Ovary (tissue), 10 donors: ENCODE measurements at regions of chr1 and their contacts with region 1.

Region 1: GRCh38 chr1:183804881-183805841 is at the start of gene RGL1:
- DNase-seq: peak; percentile 74 to 83 (median 79)
- H3K4me3 ChIP-seq: peak within 1 kb of the TSS; percentile 54
- H3K27ac ChIP-seq: peak within 1 kb of the TSS; percentile 84 to 86
- H3K4me1 ChIP-seq: peaks cover 12% of the 10 kb centered on the region
- H3K27me3 ChIP-seq: no peaks in the 10 kb centered on the region
- CTCF ChIP-seq: no peak
- EP300 ChIP-seq: no peak
- POLR2A ChIP-seq: peak; percentile 80
- total RNA-seq, gene RGL1: 14.3 to 61.6 (median 25.7) TPM

Region 2: GRCh38 chr1:183209533-183210158 is 595.5 kb before region 1 on chr1:
- intact Hi-C with region 1: no loop called
- DNase-seq: no peak
- H3K4me3 ChIP-seq: no peak overlapping the region
- H3K27ac ChIP-seq: no peak overlapping the region
- H3K4me1 ChIP-seq: no peaks in the 10 kb centered on the region
- H3K27me3 ChIP-seq: no peaks in the 10 kb centered on the region
- CTCF ChIP-seq: no peak
- EP300 ChIP-seq: no peak
- POLR2A ChIP-seq: no peak

Region 3: GRCh38 chr1:183227963-183228649 is 577.1 kb before region 1 on chr1:
- intact Hi-C with region 1: no loop called
- DNase-seq: peak in 1 of 5 donors; percentile 49
- H3K4me3 ChIP-seq: no peak overlapping the region
- H3K27ac ChIP-seq: no peak overlapping the region
- H3K4me1 ChIP-seq: no peaks in the 10 kb centered on the region
- H3K27me3 ChIP-seq: no peaks in the 10 kb centered on the region
- CTCF ChIP-seq: peak in 1 of 3 donors; percentile 25
- EP300 ChIP-seq: no peak
- POLR2A ChIP-seq: no peak

Region 4: DNA sequence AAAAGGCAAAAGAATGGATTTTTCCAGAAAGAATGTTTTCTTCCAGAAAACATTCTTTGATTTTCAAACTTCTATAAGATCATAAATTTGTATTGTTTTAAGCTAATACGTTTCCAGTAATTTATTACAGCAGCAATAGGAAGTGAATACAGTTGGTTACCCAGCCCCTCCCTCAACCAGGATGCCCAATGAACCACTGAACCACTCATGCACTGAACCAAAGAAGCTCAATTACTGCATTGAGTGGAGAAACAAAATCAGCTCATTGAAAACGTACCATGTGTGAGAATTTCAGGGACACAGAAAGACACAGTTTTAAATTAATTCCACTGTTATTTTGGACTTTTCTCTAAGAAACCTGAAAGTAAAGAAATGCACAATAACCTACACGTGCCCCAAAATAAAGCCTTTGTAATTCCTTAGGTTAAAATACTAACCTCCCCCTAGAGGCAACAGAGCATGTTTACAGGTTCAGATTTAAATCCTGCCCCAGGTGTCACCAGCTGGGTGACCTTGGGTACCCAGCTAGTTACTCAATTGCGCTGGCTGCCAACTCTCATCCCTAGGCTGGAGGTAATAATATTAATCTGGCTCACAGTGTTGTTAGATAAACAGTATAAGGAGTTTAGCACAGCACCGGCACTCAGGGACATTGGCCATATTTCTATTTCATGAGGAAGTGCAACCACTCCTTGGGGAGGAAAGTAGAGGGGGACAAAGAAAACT is 498.7 kb before region 1 on chr1:
- intact Hi-C with region 1: no loop called
- DNase-seq: no peak
- H3K4me3 ChIP-seq: no peak overlapping the region
- H3K27ac ChIP-seq: no peak overlapping the region
- H3K4me1 ChIP-seq: peaks cover 11% of the 10 kb centered on the region
- H3K27me3 ChIP-seq: no peaks in the 10 kb centered on the region
- CTCF ChIP-seq: no peak
- EP300 ChIP-seq: no peak
- POLR2A ChIP-seq: no peak

Region 5: GRCh38 chr1:183871142-183871541 is 66.0 kb after region 1 on chr1:
- intact Hi-C with region 1: loop called in 2 of 4 experiments (anchors 10 kb)
- DNase-seq: no peak
- H3K4me3 ChIP-seq: no peak overlapping the region
- H3K27ac ChIP-seq: peak overlapping the region; percentile 82 to 88
- H3K4me1 ChIP-seq: peaks cover 24% of the 10 kb centered on the region
- H3K27me3 ChIP-seq: no peaks in the 10 kb centered on the region
- CTCF ChIP-seq: no peak
- EP300 ChIP-seq: no peak
- POLR2A ChIP-seq: no peak

Region 6: GRCh38 chr1:183881387-183882131 is 76.4 kb after region 1 on chr1:
- intact Hi-C with region 1: loop called in 3 of 4 experiments (anchors 10 kb)
- DNase-seq: peak; percentile 49 to 69 (median 59)
- H3K4me3 ChIP-seq: no peak overlapping the region
- H3K27ac ChIP-seq: no peak overlapping the region
- H3K4me1 ChIP-seq: peaks cover 15% of the 10 kb centered on the region
- H3K27me3 ChIP-seq: no peaks in the 10 kb centered on the region
- CTCF ChIP-seq: no peak
- EP300 ChIP-seq: no peak
- POLR2A ChIP-seq: no peak

Region 7: DNA sequence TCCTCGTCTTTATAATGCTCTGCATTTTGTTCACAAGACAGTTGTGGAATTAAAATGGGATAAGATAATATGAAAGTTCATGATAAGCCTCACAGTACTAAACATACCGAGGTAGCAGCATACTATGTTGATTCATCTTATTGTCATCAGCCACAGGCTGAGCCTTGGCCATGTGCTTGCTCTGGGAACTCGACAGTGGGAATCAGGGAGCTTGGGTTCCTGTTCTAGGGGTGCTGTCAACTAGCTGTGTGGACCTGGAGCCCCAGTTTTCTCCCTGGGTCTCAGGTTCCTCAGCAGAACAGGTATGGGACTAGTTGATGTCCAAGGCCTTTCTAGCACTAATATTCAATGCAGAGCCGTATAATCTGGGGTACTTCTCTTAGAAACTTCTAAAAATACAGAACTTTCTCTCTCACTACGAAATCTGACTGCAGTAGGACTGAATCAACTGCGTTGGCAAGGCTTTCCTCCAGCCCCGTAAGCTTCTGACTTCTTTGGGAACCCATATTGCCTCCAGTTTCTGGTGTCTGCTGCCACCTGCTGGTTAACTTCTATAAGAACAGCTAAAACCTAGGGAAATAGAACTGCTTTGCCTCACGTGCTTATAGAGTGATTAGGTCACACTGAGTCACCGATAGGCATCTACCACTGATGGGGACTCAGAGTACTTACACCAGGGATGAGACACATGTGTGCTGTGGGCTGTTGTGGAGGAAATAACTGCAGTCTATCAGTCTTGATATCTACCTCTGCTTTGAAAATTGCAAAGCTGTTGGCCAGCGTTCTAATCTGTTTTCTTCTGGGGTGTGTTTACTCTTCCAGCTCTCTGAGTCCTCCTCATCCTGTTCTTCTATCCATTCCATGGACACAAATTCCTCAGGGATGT is 110.7 kb after region 1 on chr1:
- intact Hi-C with region 1: loop called in 1 of 4 experiments (anchors 10 kb)
- DNase-seq: peak; percentile 71 to 84 (median 75)
- H3K4me3 ChIP-seq: no peak overlapping the region
- H3K27ac ChIP-seq: peak overlapping the region; percentile 5 to 66
- H3K4me1 ChIP-seq: peaks cover 2% of the 10 kb centered on the region
- H3K27me3 ChIP-seq: no peaks in the 10 kb centered on the region
- CTCF ChIP-seq: peak; percentile 79 to 95 (median 91)
- EP300 ChIP-seq: no peak
- POLR2A ChIP-seq: no peak